IMR-90 (cell line): ENCODE measurements at regions of chr12 and their contacts with region 1.

Region 1: DNA sequence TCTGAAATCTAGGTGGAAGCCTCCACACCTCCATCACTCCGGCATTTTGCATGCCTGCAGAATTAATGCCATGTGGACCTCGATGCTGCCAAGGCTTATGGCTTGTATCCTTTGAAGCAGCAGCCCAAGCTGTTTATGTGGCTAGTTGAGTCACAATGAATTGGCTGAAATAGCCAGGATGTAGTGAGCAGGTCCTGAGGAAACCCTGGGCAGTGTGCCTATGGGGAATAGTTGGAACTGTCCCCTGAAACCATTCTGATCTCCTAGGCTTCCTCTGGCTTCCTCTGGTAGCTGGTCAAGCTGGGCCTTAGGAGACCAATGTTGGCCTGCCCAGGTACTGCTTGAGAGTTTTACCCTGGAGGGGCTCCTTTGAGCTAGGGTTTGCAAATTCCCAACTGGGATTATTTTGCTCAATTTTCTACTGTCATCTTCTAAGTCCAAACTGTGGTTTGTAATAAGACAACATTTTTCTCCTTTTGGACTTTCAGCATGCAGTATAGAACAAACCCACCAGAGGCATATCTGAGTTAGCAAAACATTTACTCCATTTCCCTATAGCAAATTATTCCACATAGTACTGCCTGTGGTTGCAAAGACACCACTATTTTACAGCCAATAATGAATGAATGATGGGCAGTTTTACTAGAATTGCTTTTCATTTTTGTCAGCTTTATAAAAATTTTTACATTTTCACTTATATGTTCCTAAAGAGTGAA is 85.1 kb upstream of the AMIGO2 start:
- DNase-seq: peak; percentile 83
- ATAC-seq: peak; percentile 79
- H3K4me3 ChIP-seq: no peak overlapping the region
- H3K27ac ChIP-seq: no peak overlapping the region
- H3K4me1 ChIP-seq: peaks cover 5% of the 10 kb centered on the region; the same call in 1 of the 2 replicates
- H3K27me3 ChIP-seq: no peaks in the 10 kb centered on the region
- CTCF ChIP-seq: no peak
- POLR2A ChIP-seq: no peak
- RAD21 ChIP-seq: no peak

Region 2: GRCh38 chr12:46998811-46999368 is 166.0 kb before region 1 on chr12:
- CTCF ChIA-PET with region 1: no interaction called
- POLR2A ChIA-PET with region 1: no interaction called
- dilution Hi-C with region 1: no loop called
- in situ Hi-C with region 1: no loop called
- intact Hi-C with region 1: no loop called
- DNase-seq: peak; percentile 82
- ATAC-seq: peak; percentile 91
- H3K4me3 ChIP-seq: no peak overlapping the region
- H3K27ac ChIP-seq: no peak overlapping the region
- H3K4me1 ChIP-seq: no peaks in the 10 kb centered on the region
- H3K27me3 ChIP-seq: no peaks in the 10 kb centered on the region
- CTCF ChIP-seq: no peak
- POLR2A ChIP-seq: no peak
- RAD21 ChIP-seq: no peak

Region 3: GRCh38 chr12:47079468-47079980 is 85.4 kb before region 1 on chr12 and contains the starts of genes AMIGO2 and PCED1B:
- CTCF ChIA-PET with region 1: no interaction called
- POLR2A ChIA-PET with region 1: no interaction called
- dilution Hi-C with region 1: no loop called
- in situ Hi-C with region 1: no loop called
- intact Hi-C with region 1: no loop called
- DNase-seq: peak; percentile 72
- ATAC-seq: peak; percentile 74
- H3K4me3 ChIP-seq: peak within 1 kb of the TSS; percentile 91
- H3K27ac ChIP-seq: peak within 1 kb of the TSS; percentile 57
- H3K4me1 ChIP-seq: peaks cover 17% of the 10 kb centered on the region
- H3K27me3 ChIP-seq: no peaks in the 10 kb centered on the region
- CTCF ChIP-seq: peak; percentile 57
- POLR2A ChIP-seq: no peak
- RAD21 ChIP-seq: peak; percentile 73
- total RNA-seq, gene AMIGO2: 31.7 and 32.6 TPM in 2 replicates
- total RNA-seq, gene PCED1B: 0.28 and 0.36 TPM in 2 replicates

Region 4: DNA sequence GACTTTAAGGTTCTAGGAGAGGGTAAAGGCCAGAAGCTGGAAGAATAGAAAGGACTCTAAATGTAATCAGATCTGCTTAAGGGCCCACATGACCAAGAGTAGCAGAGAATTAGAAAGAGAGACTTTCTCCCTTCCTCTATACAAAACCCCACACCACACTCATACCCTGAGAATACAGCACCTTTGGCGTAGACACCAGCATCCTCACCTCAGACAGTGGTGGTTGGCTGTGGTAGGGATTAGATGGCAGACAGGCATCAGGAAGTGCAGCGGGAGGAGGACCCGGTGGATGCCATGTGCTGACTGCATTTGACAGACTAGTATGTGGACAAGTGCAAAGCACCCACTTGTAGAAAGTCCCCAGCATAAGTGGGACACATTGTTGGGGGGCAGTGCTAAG is 13.1 kb after region 1 on chr12:
- CTCF ChIA-PET with region 1: interaction called, 4 read pairs
- POLR2A ChIA-PET with region 1: interaction called, 11 read pairs
- dilution Hi-C with region 1: no loop called
- in situ Hi-C with region 1: no loop called
- intact Hi-C with region 1: no loop called
- DNase-seq: no peak
- ATAC-seq: no peak
- H3K4me3 ChIP-seq: no peak overlapping the region
- H3K27ac ChIP-seq: no peak overlapping the region
- H3K4me1 ChIP-seq: no peaks in the 10 kb centered on the region; the same call in 1 of the 2 replicates
- H3K27me3 ChIP-seq: no peaks in the 10 kb centered on the region
- CTCF ChIP-seq: no peak
- POLR2A ChIP-seq: no peak
- RAD21 ChIP-seq: no peak